WTC11 (cell line): ENCODE measurements at regions of chr3 and their contacts with region 1.

Region 1: DNA sequence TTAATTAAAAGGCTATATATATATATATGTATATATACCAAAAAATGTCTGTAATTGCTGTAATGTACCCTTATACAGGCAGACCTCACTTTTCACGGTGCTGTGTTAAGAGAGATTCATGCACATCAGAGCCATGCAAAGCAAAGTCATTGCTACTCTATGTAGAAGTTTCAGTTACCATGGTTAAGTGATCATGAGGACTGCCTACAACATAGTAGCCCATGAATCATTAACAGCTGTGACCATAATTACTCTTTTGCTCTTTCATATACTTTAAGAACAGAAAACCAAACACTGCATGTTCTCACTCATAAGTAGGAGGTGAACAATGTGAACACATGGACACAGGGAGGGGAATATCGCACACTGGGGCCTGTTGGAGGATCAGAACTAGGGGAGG is 225.3 kb upstream of the EPHA3 start:
- DNase-seq: no peak
- ATAC-seq: no peak
- H3K4me3 Mint-ChIP-seq: no peak overlapping the region
- H3K27ac Mint-ChIP-seq: no peak overlapping the region
- H3K4me1 Mint-ChIP-seq: no peaks in the 10 kb centered on the region
- H3K27me3 Mint-ChIP-seq: no peaks in the 10 kb centered on the region
- CTCF ChIP-seq: no peak

Region 2: DNA sequence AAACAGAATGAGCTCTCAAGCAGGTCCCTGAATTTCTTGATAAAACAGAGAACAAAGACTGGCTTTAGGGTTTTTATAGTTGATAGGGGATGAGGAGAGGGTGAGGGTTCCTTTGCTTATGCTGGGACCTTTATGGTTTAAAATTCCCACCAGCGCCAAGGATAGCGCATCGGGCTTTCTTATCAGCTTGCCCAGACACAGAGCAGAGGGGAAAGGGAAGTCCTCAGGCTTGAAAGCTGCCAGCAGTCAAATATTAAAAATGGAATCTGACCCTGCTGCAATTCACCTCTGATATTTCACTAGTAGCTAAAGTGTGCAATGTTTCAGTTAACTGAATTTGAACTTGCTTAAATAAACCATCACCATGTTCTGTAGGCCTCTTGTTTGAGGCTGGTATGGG is 170.3 kb after region 1 on chr3:
- CTCF ChIA-PET with region 1: no interaction called
- POLR2A ChIA-PET with region 1: interaction called, 11 read pairs
- DNase-seq: no peak
- ATAC-seq: no peak
- H3K4me3 Mint-ChIP-seq: no peak overlapping the region
- H3K27ac Mint-ChIP-seq: no peak overlapping the region
- H3K4me1 Mint-ChIP-seq: peaks cover 11% of the 10 kb centered on the region
- H3K27me3 Mint-ChIP-seq: no peaks in the 10 kb centered on the region
- CTCF ChIP-seq: no peak